ENCODE measurements at regions of chr5 and their contacts with region 1.

Region 1: GRCh38 chr5:140189977-140190871 is 15.2 kb downstream of the CYSTM1 start:
- DNase-seq: no peak
- H3K4me3 ChIP-seq: no peak overlapping the region
- H3K27ac ChIP-seq: peak overlapping the region; percentile 11 to 54 (median 26)
- H3K4me1 ChIP-seq: peaks cover 16 to 40% (median 35%) of the 10 kb centered on the region in 4 donors
- H3K27me3 ChIP-seq: no peaks in the 10 kb centered on the region
- CTCF ChIP-seq: no peak
- EP300 ChIP-seq: no peak
- POLR2A ChIP-seq: no peak

Region 2: GRCh38 chr5:140157032-140157803 is 33.0 kb before region 1 on chr5:
- intact Hi-C with region 1: no loop called
- DNase-seq: peak; percentile 97
- H3K4me3 ChIP-seq: peak overlapping the region; percentile 46 to 60 (median 49)
- H3K27ac ChIP-seq: peak overlapping the region; percentile 10 to 67 (median 50)
- H3K4me1 ChIP-seq: peaks cover 11 to 31% (median 20%) of the 10 kb centered on the region in 4 donors
- H3K27me3 ChIP-seq: no peaks in the 10 kb centered on the region
- CTCF ChIP-seq: peak; percentile 93 to 98 (median 94)
- EP300 ChIP-seq: no peak
- POLR2A ChIP-seq: no peak

Region 3: GRCh38 chr5:140227048-140227447 is 36.8 kb after region 1 on chr5:
- intact Hi-C with region 1: loop called (anchors 5 kb)
- DNase-seq: no peak
- H3K4me3 ChIP-seq: no peak overlapping the region
- H3K27ac ChIP-seq: no peak overlapping the region
- H3K4me1 ChIP-seq: peaks cover 13 to 34% (median 21%) of the 10 kb centered on the region in 4 donors
- H3K27me3 ChIP-seq: no peaks in the 10 kb centered on the region
- CTCF ChIP-seq: no peak
- EP300 ChIP-seq: no peak
- POLR2A ChIP-seq: no peak

Measured in esophagus muscularis mucosa (tissue), 4 donors.